Activated CD8-positive, alpha-beta memory T cell treated with anti-CD3 and anti-CD28 coated beads, Interleukin-2, amount 10 ng/mL, durations not matched to agents 7 days and 5 days (primary cell): ENCODE measurements at regions of chr11 and their contacts with region 1.

Region 1: GRCh38 chr11:66311965-66312548 is 4.8 kb downstream of the CD248 start:
- DNase-seq: peak; percentile 97
- ATAC-seq: peak; percentile 72
- H3K4me3 Mint-ChIP-seq: peak overlapping the region; percentile 89
- H3K27ac Mint-ChIP-seq: peak overlapping the region; percentile 98
- H3K4me1 Mint-ChIP-seq: peaks cover 34% of the 10 kb centered on the region
- H3K27me3 Mint-ChIP-seq: peaks cover 5% of the 10 kb centered on the region

Region 2: DNA sequence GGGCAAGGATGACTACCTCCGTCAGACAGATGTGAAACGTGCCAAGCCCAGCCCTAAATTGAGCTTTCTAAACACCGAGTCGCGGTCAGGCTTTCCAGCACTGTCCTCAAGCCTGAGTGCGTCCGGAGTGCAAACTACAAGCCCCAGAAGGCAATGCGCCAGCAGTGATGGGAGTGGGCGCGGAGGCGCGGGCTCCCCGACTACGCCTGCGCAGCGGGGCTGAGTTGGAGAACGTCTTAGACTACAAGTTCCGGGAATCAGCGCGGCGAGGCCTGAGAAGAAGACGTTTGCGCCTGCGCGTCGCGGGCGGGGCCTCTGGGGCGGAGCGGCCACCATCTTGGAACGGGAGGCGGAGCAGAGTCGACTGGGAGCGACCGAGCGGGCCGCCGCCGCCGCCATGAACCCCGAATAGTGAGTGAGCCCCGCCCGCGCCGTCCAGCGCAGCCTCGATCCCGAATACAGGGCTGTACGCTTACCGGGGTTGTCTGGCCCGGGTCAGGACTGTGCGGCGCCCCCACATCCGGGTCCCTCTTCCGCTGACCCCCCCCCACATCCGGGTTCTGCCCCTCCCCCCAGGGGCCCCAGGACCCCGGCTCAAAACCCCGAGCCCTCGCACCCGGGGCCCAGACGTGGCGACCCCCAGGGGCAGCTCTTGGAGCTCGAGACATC is 43.6 kb before region 1 on chr11 and contains the start of gene RAB1B:
- CTCF ChIA-PET with region 1: interaction called, 13 read pairs
- DNase-seq: peak; percentile 100
- ATAC-seq: peak; percentile 88
- H3K4me3 Mint-ChIP-seq: peak within 1 kb of the TSS; percentile 91
- H3K27ac Mint-ChIP-seq: peak within 1 kb of the TSS; percentile 91
- H3K4me1 Mint-ChIP-seq: peaks cover 49% of the 10 kb centered on the region
- H3K27me3 Mint-ChIP-seq: no peaks in the 10 kb centered on the region
- total RNA-seq, gene RAB1B: 146 to 155 TPM

Region 3: DNA sequence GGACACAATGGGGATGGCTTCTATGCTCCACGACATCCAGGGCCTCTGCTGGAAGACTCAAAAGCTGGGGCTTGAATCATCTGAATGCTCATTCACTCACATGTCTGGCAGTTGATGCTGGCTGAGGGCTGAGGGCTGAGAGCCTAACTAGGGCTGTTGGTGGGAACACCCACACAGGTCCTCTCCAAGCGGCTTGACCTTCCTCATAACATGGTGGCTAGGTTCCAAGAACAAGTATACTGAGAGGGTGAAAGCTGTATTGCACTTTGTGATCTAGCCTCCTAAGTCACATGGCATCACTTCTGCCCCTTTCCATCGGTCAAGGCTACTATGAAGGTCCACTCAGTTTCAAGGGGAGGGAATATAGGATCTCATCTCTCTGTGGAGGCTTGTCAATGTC is 12.9 kb before region 1 on chr11:
- CTCF ChIA-PET with region 1: interaction called, 28 read pairs
- DNase-seq: no peak
- ATAC-seq: no peak
- H3K4me3 Mint-ChIP-seq: no peak overlapping the region
- H3K27ac Mint-ChIP-seq: no peak overlapping the region
- H3K4me1 Mint-ChIP-seq: no peaks in the 10 kb centered on the region
- H3K27me3 Mint-ChIP-seq: no peaks in the 10 kb centered on the region

Region 4: GRCh38 chr11:66336234-66337102 is 24.4 kb after region 1 on chr11 and contains the start of gene RIN1:
- CTCF ChIA-PET with region 1: interaction called, 174 read pairs
- DNase-seq: peak; percentile 90
- ATAC-seq: peak; percentile 80
- H3K4me3 Mint-ChIP-seq: peak within 1 kb of the TSS; percentile 26
- H3K27ac Mint-ChIP-seq: peak within 1 kb of the TSS; percentile 68
- H3K4me1 Mint-ChIP-seq: peaks cover 36% of the 10 kb centered on the region
- H3K27me3 Mint-ChIP-seq: no peaks in the 10 kb centered on the region
- total RNA-seq, gene RIN1: 0.68 to 2.5 TPM

Region 5: DNA sequence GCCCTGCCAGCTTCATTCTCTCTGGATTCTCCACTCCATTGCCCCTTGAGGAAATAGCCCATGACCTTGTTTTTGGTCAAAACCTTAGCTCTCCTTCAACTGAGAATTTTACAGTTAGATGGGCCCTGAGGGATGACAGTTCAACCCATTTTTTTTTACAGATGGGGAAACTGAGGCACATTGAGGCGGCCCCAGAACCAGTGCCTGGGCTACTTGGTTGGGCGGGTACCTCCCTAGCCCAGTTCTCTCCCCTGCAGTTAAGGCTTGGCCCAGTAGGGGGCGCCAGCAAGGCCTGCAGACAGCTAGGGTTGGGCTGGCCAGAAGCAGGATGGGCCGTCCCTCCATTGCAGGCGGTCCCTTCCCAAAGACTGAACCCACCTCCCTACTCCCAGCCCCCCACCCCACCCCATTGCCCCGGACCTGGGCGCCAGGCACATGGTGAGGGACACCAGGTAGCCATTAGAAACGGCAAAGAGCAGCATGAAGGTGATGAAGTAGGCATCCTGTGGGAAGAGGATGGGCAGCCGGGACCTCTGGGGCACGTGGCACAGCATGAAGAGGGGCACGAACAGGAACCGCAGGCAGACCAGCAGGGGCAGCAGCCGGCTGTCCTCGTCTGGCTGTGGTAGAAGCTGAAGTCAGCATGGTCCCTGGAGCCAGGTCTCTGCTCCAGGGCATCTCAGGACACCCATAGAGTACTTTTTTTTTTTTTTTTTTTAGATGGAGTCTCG is 51.9 kb after region 1 on chr11:
- CTCF ChIA-PET with region 1: interaction called, 10 read pairs
- DNase-seq: peak; percentile 77
- ATAC-seq: peak; percentile 54
- H3K4me3 Mint-ChIP-seq: no peak overlapping the region
- H3K27ac Mint-ChIP-seq: no peak overlapping the region
- H3K4me1 Mint-ChIP-seq: no peaks in the 10 kb centered on the region
- H3K27me3 Mint-ChIP-seq: no peaks in the 10 kb centered on the region

Region 6: DNA sequence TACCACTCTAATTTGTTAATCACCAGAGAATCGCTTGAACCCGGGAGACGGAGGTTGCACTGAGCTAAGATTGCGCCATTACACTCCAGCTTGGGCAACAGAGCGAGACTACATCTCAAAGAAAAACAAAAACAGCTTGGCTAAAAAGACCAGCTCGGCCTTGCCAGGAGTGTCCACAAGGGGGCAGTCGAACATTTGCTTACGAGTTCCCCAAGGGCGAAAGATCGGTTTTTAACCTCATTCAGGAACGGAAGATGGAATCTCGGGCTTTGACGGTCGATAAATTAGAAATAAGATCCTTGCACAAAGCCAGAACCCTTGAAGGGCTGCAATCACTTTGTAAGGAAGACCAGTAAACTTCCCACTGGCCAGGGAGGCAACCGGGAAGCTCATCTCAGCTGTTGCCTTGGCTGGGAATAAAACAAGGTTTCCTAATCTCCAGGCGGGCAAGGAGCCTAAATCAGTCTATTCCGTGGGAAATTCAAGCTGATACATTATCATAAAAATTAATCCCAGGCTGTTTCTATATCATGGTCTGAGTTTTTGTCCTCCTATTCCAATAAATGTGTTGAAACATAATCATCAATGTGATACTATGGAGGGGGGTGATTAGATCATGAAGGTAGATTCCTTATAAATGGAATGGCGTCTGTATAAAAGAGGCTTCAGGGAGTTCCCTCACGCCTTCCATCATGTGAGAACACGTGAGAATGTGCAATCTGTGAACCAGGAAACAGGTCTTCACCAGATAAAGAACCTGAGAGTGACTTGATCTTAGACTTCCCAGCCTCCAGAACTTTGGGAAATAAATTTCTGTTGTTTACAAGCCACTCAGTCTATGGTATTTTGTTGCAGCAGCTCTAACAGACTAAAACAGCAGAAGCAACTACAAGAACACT is 74.4 kb after region 1 on chr11:
- CTCF ChIA-PET with region 1: interaction called, 88 read pairs
- DNase-seq: peak; percentile 90
- ATAC-seq: peak; percentile 79
- H3K4me3 Mint-ChIP-seq: peak overlapping the region; percentile 16
- H3K27ac Mint-ChIP-seq: no peak overlapping the region
- H3K4me1 Mint-ChIP-seq: peaks cover 7% of the 10 kb centered on the region
- H3K27me3 Mint-ChIP-seq: peaks cover 15% of the 10 kb centered on the region